AG04450 (cell line): ENCODE measurements at regions of chr19 and their contacts with region 1.

Region 1: GRCh38 chr19:41308392-41309179 is 1.4 kb upstream of the CCDC97 start:
- DNase-seq: peak; percentile 69
- H3K4me3 ChIP-seq: peak overlapping the region; percentile 93
- H3K27ac ChIP-seq: peak overlapping the region; percentile 47
- H3K27me3 ChIP-seq: no peaks in the 10 kb centered on the region
- CTCF ChIP-seq: peak; percentile 97

Region 2: DNA sequence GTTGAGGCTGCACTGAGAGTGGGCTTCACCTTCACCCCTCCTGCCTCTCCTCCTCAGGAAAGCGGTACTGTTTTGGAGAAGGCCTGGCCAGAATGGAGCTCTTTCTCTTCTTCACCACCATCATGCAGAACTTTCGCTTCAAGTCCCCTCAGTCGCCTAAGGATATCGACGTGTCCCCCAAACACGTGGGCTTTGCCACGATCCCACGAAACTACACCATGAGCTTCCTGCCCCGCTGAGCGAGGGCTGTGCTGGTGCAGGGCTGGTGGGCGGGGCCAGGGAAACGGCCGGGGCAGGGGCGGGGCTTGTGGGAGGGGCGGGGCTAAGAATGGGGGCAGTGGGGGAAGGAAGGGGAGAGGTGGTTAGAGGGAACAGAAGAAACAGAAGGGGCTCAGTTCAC is 212.9 kb before region 1 on chr19:
- CTCF ChIA-PET with region 1: no interaction called
- POLR2A ChIA-PET with region 1: no interaction called
- DNase-seq: no peak
- H3K4me3 ChIP-seq: no peak overlapping the region
- H3K27ac ChIP-seq: no peak overlapping the region
- H3K27me3 ChIP-seq: peaks cover 2% of the 10 kb centered on the region
- CTCF ChIP-seq: no peak

Region 3: DNA sequence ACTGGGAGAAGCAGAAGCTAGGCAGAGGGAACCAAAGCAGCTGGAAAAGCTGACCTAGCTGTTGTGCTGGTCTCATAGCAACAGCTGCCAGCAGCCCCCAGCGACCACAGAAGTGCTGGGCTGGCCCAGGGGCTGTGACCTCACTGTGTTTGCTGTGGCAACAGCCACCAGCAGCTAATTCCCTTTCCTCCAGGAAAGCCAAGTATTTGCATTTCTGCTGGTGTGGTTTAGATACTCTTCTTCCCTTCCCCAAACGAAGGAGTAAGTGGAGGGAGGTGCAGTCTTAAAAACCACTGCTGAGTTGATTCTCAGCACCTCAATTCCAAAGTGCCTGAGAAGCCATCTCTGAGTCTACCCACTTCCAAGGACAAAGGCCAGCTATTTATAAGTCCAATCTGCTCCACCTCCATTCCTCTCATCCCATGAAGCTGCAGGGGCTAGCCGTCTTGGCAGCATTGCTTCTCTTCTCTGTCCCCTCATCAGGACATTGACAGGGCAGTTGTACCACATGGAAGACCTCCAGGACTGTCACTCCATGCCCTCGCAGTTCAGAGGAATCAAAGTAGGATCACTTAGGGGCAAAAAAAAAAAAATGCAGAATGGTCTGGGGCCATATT is 10.1 kb before region 1 on chr19:
- CTCF ChIA-PET with region 1: interaction called, 72 read pairs
- POLR2A ChIA-PET with region 1: interaction called, 5 read pairs
- DNase-seq: peak; percentile 48
- H3K4me3 ChIP-seq: no peak overlapping the region
- H3K27ac ChIP-seq: peak overlapping the region; percentile 57
- H3K27me3 ChIP-seq: no peaks in the 10 kb centered on the region
- CTCF ChIP-seq: no peak

Region 4: DNA sequence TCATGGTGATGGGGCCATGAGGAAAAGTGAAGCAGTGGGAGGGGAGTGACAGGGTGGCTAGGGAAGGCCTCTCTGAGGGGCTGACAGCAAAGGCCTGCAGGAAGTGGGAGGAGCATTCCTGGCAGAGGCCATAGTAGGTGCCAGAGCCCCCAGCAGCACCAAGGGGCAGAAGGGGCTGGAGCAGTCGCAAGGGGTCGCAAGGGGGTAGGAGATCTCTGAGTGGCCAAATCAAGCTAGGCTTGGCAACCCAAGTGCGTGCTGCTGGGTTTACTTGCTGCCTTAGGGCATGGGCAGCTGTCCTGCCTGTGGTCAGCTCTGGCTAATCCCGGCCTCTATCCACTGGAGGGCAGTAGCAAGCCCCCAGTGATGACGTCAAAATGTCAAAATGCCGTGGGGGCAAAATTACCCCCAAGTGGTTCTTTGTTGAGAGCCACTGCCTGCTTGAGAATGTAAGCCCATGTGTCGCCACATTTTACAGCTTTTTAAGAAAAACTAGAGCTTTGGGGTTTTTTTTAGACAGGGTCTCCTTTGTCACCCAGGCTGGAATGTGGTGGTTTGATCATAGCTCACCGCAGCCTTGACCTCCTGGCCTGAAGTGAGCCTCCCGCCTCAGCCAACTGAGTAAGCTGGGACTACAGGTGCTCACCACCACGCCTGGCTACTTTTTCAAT is 13.1 kb after region 1 on chr19:
- CTCF ChIA-PET with region 1: interaction called, 18 read pairs
- POLR2A ChIA-PET with region 1: interaction called, 8 read pairs
- DNase-seq: no peak
- H3K4me3 ChIP-seq: no peak overlapping the region
- H3K27ac ChIP-seq: peak overlapping the region; percentile 100
- H3K27me3 ChIP-seq: no peaks in the 10 kb centered on the region
- CTCF ChIP-seq: peak; percentile 84